Activated CD4-positive, alpha-beta memory T cell treated with anti-CD3 and anti-CD28 coated beads for 36 hours (primary cell): ENCODE measurements at regions of chr7 and their contacts with region 1.

Region 1: GRCh38 chr7:90708841-90709317 is 112.8 kb downstream of the CDK14 start:
- DNase-seq: no peak
- H3K4me3 Mint-ChIP-seq: no peak overlapping the region
- H3K27ac Mint-ChIP-seq: no peak overlapping the region
- H3K4me1 Mint-ChIP-seq: no peaks in the 10 kb centered on the region
- H3K27me3 Mint-ChIP-seq: no peaks in the 10 kb centered on the region

Region 2: GRCh38 chr7:90736968-90737939 is 28.4 kb after region 1 on chr7:
- CTCF ChIA-PET with region 1: no interaction called
- POLR2A ChIA-PET with region 1: no interaction called
- intact Hi-C with region 1: loop called (anchors 1 kb)
- DNase-seq: no peak
- H3K4me3 Mint-ChIP-seq: no peak overlapping the region
- H3K27ac Mint-ChIP-seq: no peak overlapping the region
- H3K4me1 Mint-ChIP-seq: no peaks in the 10 kb centered on the region
- H3K27me3 Mint-ChIP-seq: no peaks in the 10 kb centered on the region

Region 3: DNA sequence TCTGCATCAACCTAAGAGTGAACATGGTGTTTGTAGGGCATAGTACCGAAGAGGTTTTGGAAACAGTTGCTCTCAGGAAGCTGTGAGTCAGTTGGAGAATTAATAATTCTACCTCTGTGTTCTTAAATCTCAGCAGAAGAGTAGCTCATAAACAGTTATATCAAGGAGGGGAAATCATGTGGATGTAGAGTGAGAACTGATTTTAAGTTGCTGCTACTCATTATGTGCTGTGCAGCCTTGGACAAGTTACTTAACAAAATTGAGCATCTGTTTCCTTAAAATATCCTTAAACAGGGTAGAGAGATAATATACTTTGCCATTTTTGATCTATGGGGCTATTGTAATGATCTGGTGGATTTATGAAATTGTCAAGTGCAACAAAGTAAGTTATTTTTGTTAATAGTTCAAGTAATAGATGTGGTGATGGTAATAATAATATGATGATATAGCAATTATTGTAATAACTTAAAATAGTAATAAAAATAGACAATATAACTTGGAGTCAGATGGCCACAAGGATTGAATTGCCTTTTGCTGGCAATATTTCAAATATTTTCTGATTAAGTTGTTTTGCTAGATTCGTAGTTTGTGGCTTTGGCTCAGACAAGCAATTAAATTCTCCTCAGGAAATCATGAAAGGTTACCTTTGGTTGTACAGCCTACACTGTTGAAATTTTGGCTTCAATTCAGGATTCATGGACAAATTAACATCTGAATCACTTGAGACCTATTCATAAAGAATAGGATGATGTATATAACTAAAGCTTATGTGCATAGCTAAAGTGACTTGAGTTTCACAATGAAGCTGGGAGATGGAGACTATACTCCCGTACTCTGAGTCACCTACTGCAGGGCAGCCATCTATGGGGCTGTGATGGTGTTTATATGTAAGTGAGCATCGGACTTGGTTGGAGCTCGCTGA is 115.8 kb after region 1 on chr7:
- CTCF ChIA-PET with region 1: no interaction called
- POLR2A ChIA-PET with region 1: no interaction called
- intact Hi-C with region 1: no loop called
- DNase-seq: no peak
- H3K4me3 Mint-ChIP-seq: no peak overlapping the region
- H3K27ac Mint-ChIP-seq: no peak overlapping the region
- H3K4me1 Mint-ChIP-seq: no peaks in the 10 kb centered on the region
- H3K27me3 Mint-ChIP-seq: no peaks in the 10 kb centered on the region

Region 4: DNA sequence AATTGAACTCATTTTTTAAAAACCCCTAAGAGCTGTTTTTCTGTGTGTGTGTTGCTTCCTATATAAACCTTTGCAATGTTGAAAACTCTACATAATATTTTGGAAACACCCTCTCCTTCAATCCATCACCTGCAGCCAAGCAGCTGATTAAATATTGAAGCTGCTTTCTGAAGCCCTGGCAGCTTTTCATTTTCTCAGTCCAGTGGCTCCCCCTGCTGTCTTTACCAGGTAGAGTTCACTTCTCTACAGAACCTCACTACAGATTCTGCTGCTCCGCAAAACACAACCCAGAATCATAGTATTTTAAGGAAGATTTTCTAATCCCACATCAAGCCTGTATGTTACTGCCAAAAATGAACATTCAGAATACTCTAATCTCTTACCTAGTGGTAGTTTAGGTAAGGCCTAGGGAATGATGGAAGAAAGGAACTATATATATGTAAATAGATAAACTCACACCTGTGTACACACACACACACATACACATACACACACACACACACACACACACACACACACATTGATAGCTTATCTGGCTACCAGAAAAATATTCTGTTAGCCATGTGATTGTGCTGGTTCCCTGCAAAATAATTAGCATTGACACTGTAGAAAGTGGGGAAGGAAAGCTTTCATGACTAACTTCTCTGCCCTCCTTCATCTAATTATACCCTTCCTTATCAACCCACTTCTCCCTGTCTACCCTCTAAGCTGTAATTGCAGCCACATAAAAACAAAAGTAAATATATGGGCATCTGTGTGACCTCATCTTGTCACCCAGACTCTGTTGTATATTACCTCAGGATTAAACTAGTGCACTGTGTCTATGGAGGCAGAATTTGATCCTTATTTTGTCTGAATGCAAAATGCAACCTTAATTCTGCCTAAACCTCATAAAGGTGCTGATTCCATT is 325.8 kb after region 1 on chr7:
- CTCF ChIA-PET with region 1: no interaction called
- POLR2A ChIA-PET with region 1: no interaction called
- intact Hi-C with region 1: no loop called
- DNase-seq: peak; percentile 18
- H3K4me3 Mint-ChIP-seq: no peak overlapping the region
- H3K27ac Mint-ChIP-seq: no peak overlapping the region
- H3K4me1 Mint-ChIP-seq: no peaks in the 10 kb centered on the region
- H3K27me3 Mint-ChIP-seq: no peaks in the 10 kb centered on the region